Heart left ventricle (tissue), 16 donors: ENCODE measurements at regions of chr17 and their contacts with region 1.

Region 1: GRCh38 chr17:31842183-31843069 is 16.6 kb downstream of the COPRS start:
- DNase-seq: peak; percentile 66 to 78 (median 69)
- ATAC-seq: peak; percentile 72 to 92 (median 85)
- H3K4me3 ChIP-seq: peak overlapping the region in 8 of 12 donors; percentile 6 to 40 (median 22)
- H3K27ac ChIP-seq: peak overlapping the region in 7 of 12 donors; percentile 2 to 62 (median 37)
- H3K4me1 ChIP-seq: peaks cover 0 to 25% (median 13%) of the 10 kb centered on the region in 12 donors
- H3K27me3 ChIP-seq: no peaks in the 10 kb centered on the region
- CTCF ChIP-seq: peak; percentile 89 to 99 (median 98)
- POLR2A ChIP-seq: no peak

Region 2: DNA sequence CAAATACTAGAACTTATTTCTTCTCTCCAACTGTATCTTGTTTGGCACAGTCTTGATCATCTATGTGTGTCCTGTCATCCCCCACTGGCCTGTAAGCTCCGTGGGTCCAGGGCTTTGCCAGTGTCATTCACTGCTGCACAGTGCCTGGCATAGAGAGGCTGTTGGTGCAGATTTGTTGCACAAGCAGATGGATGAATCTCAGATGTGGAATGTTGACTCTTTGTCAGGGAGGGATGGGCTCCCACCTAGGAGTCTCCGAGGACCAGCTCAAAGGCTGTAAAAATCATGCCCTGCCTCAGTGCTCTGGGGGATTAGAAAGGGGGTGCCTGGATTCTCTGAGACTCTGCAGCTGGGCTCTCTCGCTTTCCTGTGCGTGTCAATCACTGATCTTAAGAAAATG is 390.3 kb before region 1 on chr17:
- intact Hi-C with region 1: loop called in 1 of 10 experiments (anchors 5 kb)
- DNase-seq: no peak
- ATAC-seq: no peak
- H3K4me3 ChIP-seq: no peak overlapping the region
- H3K27ac ChIP-seq: peak overlapping the region in 1 of 12 donors; percentile 31
- H3K4me1 ChIP-seq: peaks cover 0 to 12% (median 0%) of the 10 kb centered on the region in 12 donors
- H3K27me3 ChIP-seq: no peaks in the 10 kb centered on the region
- CTCF ChIP-seq: no peak
- POLR2A ChIP-seq: no peak

Region 3: DNA sequence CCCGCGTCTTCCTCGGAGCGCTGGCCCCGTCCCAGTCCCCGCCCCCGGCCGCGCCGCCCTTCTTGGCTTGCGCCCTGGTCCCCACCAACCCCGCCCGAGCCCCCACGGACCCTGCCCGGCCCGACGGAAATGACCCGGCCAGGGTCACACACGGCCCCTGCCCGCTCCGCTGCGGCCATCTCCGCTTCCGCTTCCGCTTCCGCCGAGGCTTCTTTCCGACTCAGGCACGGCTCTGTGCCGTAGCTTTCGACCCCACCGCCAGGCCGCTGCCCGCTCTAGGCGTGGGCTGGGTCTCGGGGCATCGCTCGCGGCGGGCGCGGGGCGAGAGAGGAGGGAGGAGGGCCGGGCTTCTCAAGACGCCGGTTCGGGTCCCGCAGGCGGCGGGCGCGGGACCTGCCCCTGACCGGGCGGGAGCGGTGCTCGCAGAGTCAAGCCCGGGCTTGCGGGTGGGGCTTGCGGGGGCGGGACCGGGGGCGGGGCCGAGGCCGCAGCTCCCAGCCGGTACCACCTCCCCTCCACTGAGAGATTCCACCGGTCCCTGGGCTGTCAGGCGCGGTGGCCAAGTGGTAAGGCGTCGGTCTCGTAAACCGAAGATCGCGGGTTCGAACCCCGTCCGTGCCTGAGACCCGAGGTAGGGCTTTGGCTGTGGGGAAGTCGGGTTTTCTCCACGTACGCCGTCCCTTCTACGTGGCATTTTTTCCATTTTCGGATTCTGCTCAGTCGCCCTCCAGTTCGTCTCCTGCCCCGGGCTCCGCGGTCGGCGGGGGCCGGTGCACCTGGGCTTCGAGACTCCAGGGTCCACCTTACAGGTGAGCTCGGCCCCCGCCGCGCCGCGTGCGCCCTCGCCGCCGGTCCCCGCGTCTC is 292.7 kb before region 1 on chr17:
- intact Hi-C with region 1: loop called in 1 of 10 experiments (anchors 2 kb)
- DNase-seq: peak; percentile 90 to 96 (median 92)
- ATAC-seq: peak; percentile 88 to 95 (median 94)
- H3K4me3 ChIP-seq: peak overlapping the region; percentile 51 to 93 (median 80)
- H3K27ac ChIP-seq: peak overlapping the region; percentile 81 to 97 (median 94)
- H3K4me1 ChIP-seq: peaks cover 0 to 17% (median 3%) of the 10 kb centered on the region in 12 donors
- H3K27me3 ChIP-seq: no peaks in the 10 kb centered on the region
- CTCF ChIP-seq: no peak
- POLR2A ChIP-seq: peak in 1 of 2 donors; percentile 68

Region 4: DNA sequence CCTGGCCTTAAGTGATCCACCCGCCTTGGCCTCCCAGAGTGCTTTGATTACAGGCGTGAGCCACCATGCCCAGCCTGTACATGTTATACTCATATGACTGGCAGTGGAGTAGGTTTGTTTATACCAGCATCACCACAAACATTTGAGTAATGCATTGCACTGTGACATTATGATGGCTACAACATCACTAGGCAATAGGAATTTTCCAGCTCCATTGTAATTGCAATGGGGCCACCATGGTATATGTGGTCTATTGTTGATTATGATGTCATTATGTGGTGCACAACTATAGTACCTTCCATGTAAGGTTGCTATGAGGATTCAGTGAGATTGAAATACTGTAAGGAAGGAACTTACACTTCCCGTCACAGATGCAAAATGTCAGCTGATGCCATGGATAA is 152.3 kb before region 1 on chr17:
- intact Hi-C with region 1: loop called in 4 of 10 experiments (anchors 5 to 10 kb)
- DNase-seq: no peak
- ATAC-seq: no peak
- H3K4me3 ChIP-seq: no peak overlapping the region
- H3K27ac ChIP-seq: no peak overlapping the region
- H3K4me1 ChIP-seq: peaks cover 0 to 41% (median 18%) of the 10 kb centered on the region in 12 donors
- H3K27me3 ChIP-seq: no peaks in the 10 kb centered on the region
- CTCF ChIP-seq: no peak
- POLR2A ChIP-seq: no peak

Region 5: DNA sequence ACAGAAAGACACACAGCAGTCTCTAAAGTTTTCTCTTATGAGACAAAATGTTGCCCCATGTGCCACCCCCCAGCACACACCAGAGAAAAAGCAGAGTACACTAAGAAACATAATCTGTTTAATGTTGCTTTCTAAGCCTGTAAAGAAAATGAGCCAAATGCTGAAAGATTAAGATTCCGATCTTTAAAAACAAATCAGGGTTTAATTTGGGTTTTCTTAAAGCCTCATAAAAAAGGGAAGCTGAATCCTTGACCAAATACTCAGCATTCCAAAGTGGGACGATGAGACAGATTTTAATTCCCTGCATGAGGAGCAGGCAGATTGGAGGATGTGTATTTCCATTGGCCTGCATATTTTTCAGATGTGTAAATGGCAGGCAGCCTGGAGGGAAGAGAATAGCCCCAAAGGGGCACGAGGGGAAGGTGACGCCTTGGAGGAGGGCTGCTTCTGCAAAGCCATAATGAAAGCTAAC is 101.8 kb before region 1 on chr17:
- intact Hi-C with region 1: loop called in 1 of 10 experiments (anchors 5 kb)
- DNase-seq: no peak
- ATAC-seq: no peak
- H3K4me3 ChIP-seq: no peak overlapping the region
- H3K27ac ChIP-seq: peak overlapping the region in 5 of 12 donors; percentile 43 to 80 (median 70)
- H3K4me1 ChIP-seq: peaks cover 6 to 63% (median 22%) of the 10 kb centered on the region in 12 donors
- H3K27me3 ChIP-seq: peaks cover 0 to 4% (median 0%) of the 10 kb centered on the region in 9 donors
- CTCF ChIP-seq: no peak
- POLR2A ChIP-seq: no peak

Region 6: DNA sequence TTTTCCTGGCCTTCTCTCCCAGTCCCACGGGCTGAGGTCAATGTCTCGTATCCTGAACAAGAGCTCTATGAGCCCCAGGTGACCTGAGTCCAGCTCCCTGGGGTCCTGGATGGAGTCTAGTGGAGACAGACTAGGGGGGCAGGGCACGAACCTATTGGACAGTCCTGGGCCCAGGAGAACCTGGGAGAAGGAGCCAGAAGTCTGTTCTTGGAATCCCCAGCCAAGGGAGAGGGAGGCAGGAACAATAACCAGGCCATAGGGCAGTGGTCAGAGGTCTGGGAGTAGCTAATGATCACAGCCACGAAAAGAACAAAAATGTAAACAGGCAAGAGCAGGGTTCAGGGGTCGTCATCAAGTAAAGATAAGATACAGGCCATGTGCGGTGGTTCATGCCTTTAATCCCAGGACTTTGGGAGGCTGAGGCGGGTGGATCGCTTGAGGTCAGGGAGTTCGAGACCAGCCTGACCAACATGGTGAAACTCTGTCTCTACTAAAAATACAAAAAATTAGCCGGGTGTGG is 44.2 kb before region 1 on chr17:
- intact Hi-C with region 1: no loop called
- DNase-seq: no peak
- ATAC-seq: no peak
- H3K4me3 ChIP-seq: no peak overlapping the region
- H3K27ac ChIP-seq: no peak overlapping the region
- H3K4me1 ChIP-seq: peaks cover 0 to 3% (median 0%) of the 10 kb centered on the region in 12 donors
- H3K27me3 ChIP-seq: no peaks in the 10 kb centered on the region
- CTCF ChIP-seq: no peak
- POLR2A ChIP-seq: no peak